Activated B cell treated with CpG ODN at 0.5 μM for 24 hours (primary cell): ENCODE measurements at regions of chr5 and their contacts with region 1.

Region 1: GRCh38 chr5:1385395-1386273 is 40.7 kb upstream of the CLPTM1L start:
- DNase-seq: peak; percentile 85
- ATAC-seq: peak; percentile 94
- H3K4me3 Mint-ChIP-seq: peak overlapping the region; percentile 96
- H3K27ac Mint-ChIP-seq: peak overlapping the region; percentile 92
- H3K4me1 Mint-ChIP-seq: peaks cover 27% of the 10 kb centered on the region
- H3K27me3 Mint-ChIP-seq: peaks cover 2% of the 10 kb centered on the region
- CTCF ChIP-seq: no peak

Region 2: GRCh38 chr5:963673-964531 is 421.7 kb before region 1 on chr5:
- CTCF ChIA-PET with region 1: no interaction called
- POLR2A ChIA-PET with region 1: no interaction called
- intact Hi-C with region 1: no loop called
- DNase-seq: no peak
- ATAC-seq: peak; percentile 81
- H3K4me3 Mint-ChIP-seq: no peak overlapping the region
- H3K27ac Mint-ChIP-seq: no peak overlapping the region
- H3K4me1 Mint-ChIP-seq: peaks cover 9% of the 10 kb centered on the region
- H3K27me3 Mint-ChIP-seq: peaks cover 48% of the 10 kb centered on the region
- CTCF ChIP-seq: no peak

Region 3: GRCh38 chr5:1371602-1372342 is 13.9 kb before region 1 on chr5:
- CTCF ChIA-PET with region 1: interaction called, 8 read pairs
- POLR2A ChIA-PET with region 1: interaction called, 13 read pairs
- intact Hi-C with region 1: loop called (anchors 2 kb)
- DNase-seq: no peak
- ATAC-seq: peak; percentile 84
- H3K4me3 Mint-ChIP-seq: peak overlapping the region; percentile 21
- H3K27ac Mint-ChIP-seq: peak overlapping the region; percentile 57
- H3K4me1 Mint-ChIP-seq: peaks cover 47% of the 10 kb centered on the region
- H3K27me3 Mint-ChIP-seq: no peaks in the 10 kb centered on the region
- CTCF ChIP-seq: no peak

Region 4: DNA sequence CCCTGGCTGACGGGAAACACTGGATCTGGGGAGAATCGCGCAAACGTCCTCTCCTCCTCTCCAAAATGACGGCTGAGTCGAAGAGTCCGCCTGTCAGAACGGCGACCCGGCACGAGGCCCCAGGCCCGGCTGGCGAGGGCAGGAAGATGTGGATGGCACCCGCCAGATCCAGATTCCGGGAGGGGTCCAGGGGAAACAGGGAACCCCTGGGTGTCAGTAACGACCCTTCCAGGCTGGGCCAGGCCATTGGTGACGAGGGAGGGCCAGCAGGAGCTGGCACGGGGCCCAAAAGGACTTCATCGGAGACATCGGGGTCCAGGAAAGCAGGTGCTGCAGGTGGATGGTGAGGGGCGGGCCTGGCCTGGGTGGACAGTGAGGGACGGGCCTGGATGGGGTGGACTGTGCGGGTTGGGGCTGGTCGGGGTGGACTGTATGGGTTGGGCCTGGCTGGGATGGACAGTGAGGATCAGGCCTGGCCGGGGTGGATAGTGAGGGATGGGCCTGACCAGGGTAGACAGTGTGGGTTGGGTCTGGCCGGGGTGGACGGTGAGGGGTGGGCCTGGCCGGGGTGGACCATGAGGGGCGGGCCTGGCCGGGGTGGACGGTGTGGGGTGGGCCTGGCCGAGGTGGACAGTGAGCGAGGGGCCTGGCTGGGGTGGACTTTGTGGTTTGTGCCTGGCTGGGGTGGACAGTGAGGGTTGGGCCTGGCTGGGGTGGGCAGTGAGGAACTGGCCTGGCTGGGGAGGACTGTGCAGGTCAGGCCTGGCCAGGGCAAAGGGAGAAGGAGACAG is 45.6 kb after region 1 on chr5:
- CTCF ChIA-PET with region 1: no interaction called
- POLR2A ChIA-PET with region 1: no interaction called
- intact Hi-C with region 1: no loop called
- DNase-seq: no peak
- ATAC-seq: no peak
- H3K4me3 Mint-ChIP-seq: no peak overlapping the region
- H3K27ac Mint-ChIP-seq: no peak overlapping the region
- H3K4me1 Mint-ChIP-seq: no peaks in the 10 kb centered on the region
- H3K27me3 Mint-ChIP-seq: peaks cover 7% of the 10 kb centered on the region
- CTCF ChIP-seq: no peak

Region 5: GRCh38 chr5:1523771-1524480 is 138.3 kb after region 1 on chr5 and contains the start of gene LPCAT1:
- CTCF ChIA-PET with region 1: no interaction called
- POLR2A ChIA-PET with region 1: no interaction called
- intact Hi-C with region 1: no loop called
- DNase-seq: peak; percentile 91
- ATAC-seq: peak; percentile 82
- H3K4me3 Mint-ChIP-seq: peak within 1 kb of the TSS; percentile 91
- H3K27ac Mint-ChIP-seq: peak within 1 kb of the TSS; percentile 87
- H3K4me1 Mint-ChIP-seq: peaks cover 57% of the 10 kb centered on the region
- H3K27me3 Mint-ChIP-seq: no peaks in the 10 kb centered on the region
- CTCF ChIP-seq: no peak
- total RNA-seq, gene LPCAT1: 246 and 269 TPM in 2 replicates